ENCODE measurements at regions of chr20 and their contacts with region 1.

Region 1: DNA sequence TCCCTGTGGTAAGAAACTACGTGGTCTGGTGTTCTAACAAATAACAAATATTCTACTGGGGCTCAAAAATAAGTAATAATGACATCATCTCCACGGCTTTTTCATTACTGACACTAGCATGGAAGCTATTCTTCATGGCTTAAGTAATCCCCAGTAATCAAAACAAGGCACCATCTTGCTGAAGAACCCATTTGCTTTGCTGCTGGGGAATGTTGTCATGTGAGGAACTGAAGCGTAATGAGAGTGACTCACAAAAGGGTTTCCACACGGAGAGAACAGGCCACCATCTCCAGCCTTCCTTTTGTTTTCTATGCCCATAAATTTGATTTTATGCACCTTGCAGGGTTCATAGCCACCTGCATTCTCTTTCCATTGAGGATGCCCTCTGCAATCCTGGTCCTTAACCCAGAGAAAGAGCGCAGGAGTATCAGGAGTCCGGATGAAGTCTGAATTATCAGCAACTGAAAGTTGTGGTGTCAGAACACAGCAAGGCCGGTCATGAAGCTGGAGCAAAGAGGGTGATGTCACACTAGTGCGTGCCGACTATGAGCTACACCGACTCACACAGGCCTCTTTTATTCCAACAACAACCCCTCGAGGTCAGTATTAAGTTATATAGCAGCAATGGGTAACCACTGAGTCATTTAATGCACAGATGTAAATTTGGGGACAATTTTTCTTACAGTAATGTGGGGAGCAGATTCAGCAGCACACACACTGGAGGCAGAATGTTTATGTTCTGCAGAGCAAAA is 173.7 kb upstream of the SSTR4 start:
- DNase-seq: no peak
- H3K4me3 ChIP-seq: no peak overlapping the region
- H3K27ac ChIP-seq: peak overlapping the region; percentile 77
- H3K4me1 ChIP-seq: peaks cover 16% of the 10 kb centered on the region
- H3K27me3 ChIP-seq: peaks cover 8% of the 10 kb centered on the region
- CTCF ChIP-seq: no peak

Region 2: GRCh38 chr20:22586645-22587310 is 274.6 kb before region 1 on chr20:
- intact Hi-C with region 1: no loop called
- DNase-seq: no peak
- H3K4me3 ChIP-seq: no peak overlapping the region
- H3K27ac ChIP-seq: no peak overlapping the region
- H3K4me1 ChIP-seq: peaks cover 28% of the 10 kb centered on the region
- H3K27me3 ChIP-seq: peaks cover 99% of the 10 kb centered on the region
- CTCF ChIP-seq: peak; percentile 43

Region 3: DNA sequence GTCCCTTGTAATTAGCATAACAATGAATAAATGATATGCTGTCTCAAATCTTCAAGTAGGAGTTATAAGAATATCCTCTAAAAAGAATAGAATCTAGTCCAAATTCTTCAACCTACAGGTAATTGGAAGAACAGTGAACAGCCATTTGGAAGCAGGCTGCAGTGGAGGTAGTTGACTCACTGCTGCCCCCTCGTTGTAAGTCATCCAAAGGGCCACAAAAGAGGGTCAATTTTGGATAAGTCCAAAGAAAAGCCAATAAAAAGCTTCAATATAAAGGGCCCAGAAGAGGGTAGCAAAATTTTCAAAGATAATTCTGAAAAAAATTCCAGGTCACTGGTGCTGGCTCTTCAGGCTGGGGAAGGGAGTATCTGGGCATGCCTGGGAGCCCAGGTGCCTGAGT is 112.9 kb after region 1 on chr20:
- intact Hi-C with region 1: loop called (anchors 10 kb)
- DNase-seq: no peak
- H3K4me3 ChIP-seq: no peak overlapping the region
- H3K27ac ChIP-seq: no peak overlapping the region
- H3K4me1 ChIP-seq: peaks cover 21% of the 10 kb centered on the region
- H3K27me3 ChIP-seq: peaks cover 41% of the 10 kb centered on the region
- CTCF ChIP-seq: peak; percentile 30

Region 4: GRCh38 chr20:23050847-23051631 is 189.6 kb after region 1 on chr20:
- intact Hi-C with region 1: loop called (anchors 10 kb)
- DNase-seq: peak; percentile 87
- H3K4me3 ChIP-seq: peak overlapping the region; percentile 80
- H3K27ac ChIP-seq: peak overlapping the region; percentile 96
- H3K4me1 ChIP-seq: peaks cover 57% of the 10 kb centered on the region
- H3K27me3 ChIP-seq: peaks cover 68% of the 10 kb centered on the region
- CTCF ChIP-seq: peak; percentile 79

Measured in left ventricle myocardium inferior (tissue), 1 donor.